Activated CD8-positive, alpha-beta T cell treated with anti-CD3 and anti-CD28 coated beads for 36 hours (primary cell): ENCODE measurements at regions of chr13 and their contacts with region 1.

Region 1: DNA sequence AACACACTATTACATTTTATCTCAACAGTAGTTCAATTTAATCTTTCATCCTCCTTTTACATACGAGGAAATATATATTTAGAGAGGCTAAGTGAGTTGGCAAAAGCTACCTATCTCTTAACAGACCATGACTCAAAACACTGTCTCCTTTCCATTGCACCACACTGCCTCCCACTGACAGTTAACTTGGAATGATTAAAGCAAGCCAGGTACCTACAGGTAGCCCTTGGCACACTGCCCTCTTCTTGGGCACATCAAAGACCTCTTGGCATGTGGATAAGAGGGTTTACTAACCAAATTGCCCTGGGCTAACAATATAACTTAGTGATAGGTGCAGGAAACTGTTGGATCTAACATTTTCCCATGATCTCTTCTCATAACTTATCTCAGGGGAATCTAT is 1.8 kb downstream of the ABHD13 start:
- DNase-seq: no peak
- ATAC-seq: no peak
- H3K4me3 Mint-ChIP-seq: peak overlapping the region; percentile 87
- H3K27ac Mint-ChIP-seq: no peak overlapping the region
- H3K4me1 Mint-ChIP-seq: peaks cover 51% of the 10 kb centered on the region
- H3K27me3 Mint-ChIP-seq: no peaks in the 10 kb centered on the region
- CTCF ChIP-seq: no peak

Region 2: GRCh38 chr13:108269601-108270328 is 49.7 kb after region 1 on chr13 and contains the start of gene TNFSF13B:
- CTCF ChIA-PET with region 1: interaction called, 3 read pairs
- POLR2A ChIA-PET with region 1: interaction called, 3 read pairs
- intact Hi-C with region 1: loop called (anchors 5 kb)
- DNase-seq: peak; percentile 76
- ATAC-seq: peak; percentile 86
- H3K4me3 Mint-ChIP-seq: peak within 1 kb of the TSS; percentile 74
- H3K27ac Mint-ChIP-seq: peak within 1 kb of the TSS; percentile 83
- H3K4me1 Mint-ChIP-seq: peaks cover 37% of the 10 kb centered on the region
- H3K27me3 Mint-ChIP-seq: no peaks in the 10 kb centered on the region
- CTCF ChIP-seq: peak; percentile 31
- total RNA-seq, gene TNFSF13B: 2.8 to 4.4 TPM

Region 3: GRCh38 chr13:108283110-108283509 is 63.1 kb after region 1 on chr13:
- CTCF ChIA-PET with region 1: no interaction called
- POLR2A ChIA-PET with region 1: no interaction called
- intact Hi-C with region 1: no loop called
- DNase-seq: no peak
- ATAC-seq: no peak
- H3K4me3 Mint-ChIP-seq: no peak overlapping the region
- H3K27ac Mint-ChIP-seq: no peak overlapping the region
- H3K4me1 Mint-ChIP-seq: no peaks in the 10 kb centered on the region
- H3K27me3 Mint-ChIP-seq: no peaks in the 10 kb centered on the region
- CTCF ChIP-seq: no peak